Calu3 (cell line): ENCODE measurements at regions of chr14 and their contacts with region 1.

Region 1: GRCh38 chr14:69242311-69243224 is 17.4 kb upstream of the GALNT16 start:
- DNase-seq: peak; percentile 61
- H3K4me3 Mint-ChIP-seq: no peak overlapping the region
- H3K27ac Mint-ChIP-seq: no peak overlapping the region
- H3K4me1 Mint-ChIP-seq: peaks cover 9% of the 10 kb centered on the region
- H3K27me3 Mint-ChIP-seq: no peaks in the 10 kb centered on the region
- CTCF ChIP-seq: peak; percentile 52

Region 2: GRCh38 chr14:69342882-69343525 is 100.4 kb after region 1 on chr14:
- CTCF ChIA-PET with region 1: no interaction called
- intact Hi-C with region 1: loop called (anchors 5 kb)
- DNase-seq: peak; percentile 41
- H3K4me3 Mint-ChIP-seq: no peak overlapping the region
- H3K27ac Mint-ChIP-seq: no peak overlapping the region
- H3K4me1 Mint-ChIP-seq: peaks cover 19% of the 10 kb centered on the region
- H3K27me3 Mint-ChIP-seq: no peaks in the 10 kb centered on the region
- CTCF ChIP-seq: no peak

Region 3: GRCh38 chr14:69475194-69475818 is 232.7 kb after region 1 on chr14:
- CTCF ChIA-PET with region 1: interaction called, 5 read pairs
- intact Hi-C with region 1: loop called (anchors 5 kb)
- DNase-seq: peak; percentile 48
- H3K4me3 Mint-ChIP-seq: no peak overlapping the region
- H3K27ac Mint-ChIP-seq: no peak overlapping the region
- H3K4me1 Mint-ChIP-seq: no peaks in the 10 kb centered on the region
- H3K27me3 Mint-ChIP-seq: peaks cover 32% of the 10 kb centered on the region
- CTCF ChIP-seq: peak; percentile 59